ENCODE measurements at regions of chr10 and their contacts with region 1.

Region 1: DNA sequence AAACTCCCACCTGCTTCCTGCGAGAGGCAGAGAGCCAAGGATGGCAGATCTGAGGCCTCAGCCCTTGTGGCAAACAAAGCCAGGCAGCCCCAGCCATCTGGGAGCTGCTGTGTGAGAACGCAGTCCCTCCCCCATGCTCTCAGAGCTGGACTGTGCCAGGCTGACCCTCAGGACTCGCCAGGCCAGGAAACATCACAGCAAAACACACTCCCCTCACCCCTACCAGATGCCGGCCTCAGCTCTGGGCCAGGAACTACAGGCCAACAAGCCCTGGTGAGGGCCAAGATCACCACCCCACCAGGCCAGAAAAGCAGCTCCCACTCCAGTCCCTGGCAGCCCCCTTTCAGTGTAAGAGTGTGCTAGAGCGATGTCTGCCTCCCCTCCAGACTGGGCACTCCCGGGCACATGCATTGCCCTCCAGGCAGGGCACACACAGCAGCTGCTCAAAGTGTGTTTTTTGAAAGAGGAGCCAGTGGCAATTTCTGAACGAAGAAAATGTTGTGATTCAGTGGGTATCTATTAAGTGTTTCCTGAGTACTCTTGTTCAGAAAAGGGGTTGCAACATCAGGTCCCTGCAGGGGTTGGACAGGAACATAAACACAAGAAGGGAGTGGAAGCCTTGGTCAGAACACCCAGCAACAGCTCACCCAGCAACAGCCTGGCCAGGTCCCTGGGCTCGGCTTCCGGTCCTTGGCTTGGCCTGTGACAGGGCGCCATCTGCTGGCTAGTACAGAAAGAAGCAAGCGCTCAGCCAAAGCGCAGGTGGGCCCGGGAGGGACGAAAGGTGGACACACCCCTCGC is 18.3 kb downstream of the LRRC20 start:
- DNase-seq: peak; percentile 91
- H3K4me3 Mint-ChIP-seq: no peak overlapping the region
- H3K27ac Mint-ChIP-seq: no peak overlapping the region
- H3K4me1 Mint-ChIP-seq: peaks cover 7% of the 10 kb centered on the region
- H3K27me3 Mint-ChIP-seq: no peaks in the 10 kb centered on the region

Region 2: DNA sequence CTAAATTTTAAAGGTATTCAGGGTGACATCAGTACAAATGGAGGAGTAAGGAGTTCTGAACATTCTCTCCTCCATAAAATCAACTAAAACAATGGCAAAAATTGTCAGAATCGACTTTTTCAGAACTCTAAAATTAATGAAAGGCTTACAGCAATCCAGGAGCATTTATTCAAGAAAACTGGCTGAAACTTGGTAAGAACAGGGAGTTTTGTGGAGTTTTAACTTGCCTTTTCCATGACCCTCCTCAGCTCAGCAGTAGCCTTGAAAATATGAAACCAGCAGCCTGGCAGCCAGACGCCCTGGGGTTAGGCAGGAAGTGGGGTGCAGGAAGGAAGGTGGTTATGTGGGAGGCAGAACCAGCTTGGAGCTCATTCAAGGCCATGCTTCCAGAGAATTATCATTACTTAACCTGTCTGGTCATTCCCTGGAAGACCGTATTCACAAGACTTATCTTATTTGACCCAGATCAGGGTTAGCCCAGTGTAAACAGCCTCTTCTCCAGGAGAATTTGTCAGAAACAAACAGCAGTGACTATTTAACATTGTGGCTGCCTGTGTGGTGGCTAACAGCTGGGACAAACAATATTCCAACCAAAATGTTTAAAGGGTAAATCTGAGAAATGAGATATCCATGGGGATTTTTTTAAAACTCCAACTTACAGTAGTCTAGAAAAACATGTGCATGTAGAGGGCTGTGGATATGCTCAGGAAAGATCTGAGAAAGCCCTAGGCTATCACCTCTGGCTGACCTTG is 387.2 kb before region 1 on chr10:
- CTCF ChIA-PET with region 1: no interaction called
- POLR2A ChIA-PET with region 1: no interaction called
- intact Hi-C with region 1: no loop called
- DNase-seq: no peak
- H3K4me3 Mint-ChIP-seq: no peak overlapping the region
- H3K27ac Mint-ChIP-seq: no peak overlapping the region
- H3K4me1 Mint-ChIP-seq: no peaks in the 10 kb centered on the region
- H3K27me3 Mint-ChIP-seq: peaks cover 45% of the 10 kb centered on the region

Region 3: GRCh38 chr10:70115948-70116682 is 248.1 kb before region 1 on chr10:
- CTCF ChIA-PET with region 1: interaction called, 56 read pairs
- POLR2A ChIA-PET with region 1: no interaction called
- intact Hi-C with region 1: loop called (anchors 1 kb)
- DNase-seq: peak; percentile 69
- H3K4me3 Mint-ChIP-seq: no peak overlapping the region
- H3K27ac Mint-ChIP-seq: no peak overlapping the region
- H3K4me1 Mint-ChIP-seq: peaks cover 4% of the 10 kb centered on the region
- H3K27me3 Mint-ChIP-seq: no peaks in the 10 kb centered on the region

Region 4: GRCh38 chr10:70212879-70213278 is 151.3 kb before region 1 on chr10:
- CTCF ChIA-PET with region 1: interaction called, 383 read pairs
- POLR2A ChIA-PET with region 1: no interaction called
- intact Hi-C with region 1: no loop called
- DNase-seq: no peak
- H3K4me3 Mint-ChIP-seq: no peak overlapping the region
- H3K27ac Mint-ChIP-seq: no peak overlapping the region
- H3K4me1 Mint-ChIP-seq: no peaks in the 10 kb centered on the region
- H3K27me3 Mint-ChIP-seq: no peaks in the 10 kb centered on the region

Region 5: DNA sequence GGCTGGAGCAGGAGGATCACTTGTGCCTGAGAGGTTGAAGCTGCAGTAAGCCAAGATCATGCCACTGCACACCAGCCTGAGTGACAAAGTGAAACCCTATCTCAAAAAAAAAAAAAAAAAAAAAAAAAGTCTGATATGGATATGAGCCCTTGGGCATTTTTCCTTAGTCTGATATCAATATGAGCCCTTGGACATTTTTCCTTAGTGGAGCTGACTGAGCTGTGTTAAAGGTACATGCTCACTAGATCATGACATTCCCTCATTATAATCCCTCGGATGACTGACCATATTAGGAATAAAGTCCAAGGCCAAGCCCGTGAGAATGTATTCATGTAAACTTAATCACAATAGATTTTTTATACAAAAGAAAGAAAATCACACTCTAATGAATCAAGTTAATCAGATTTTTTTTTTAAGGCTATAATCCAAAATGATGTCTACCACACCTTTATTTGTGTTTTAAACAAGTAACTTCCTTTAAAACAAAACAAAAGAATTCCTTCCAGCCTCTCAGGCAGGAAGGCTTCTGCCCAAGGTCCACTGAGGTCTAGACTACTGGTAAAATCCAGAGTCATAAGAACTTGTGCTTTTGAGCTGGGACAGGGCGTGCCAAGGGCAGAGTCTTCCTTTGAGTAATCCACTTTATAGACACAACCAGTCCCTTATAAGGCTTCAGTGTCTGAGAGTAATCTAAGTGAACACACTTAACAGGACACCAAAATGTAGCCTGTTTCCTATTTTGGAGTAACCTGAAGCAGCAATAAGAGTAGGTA is 136.4 kb before region 1 on chr10:
- CTCF ChIA-PET with region 1: interaction called, 383 read pairs
- POLR2A ChIA-PET with region 1: interaction called, 9 read pairs
- intact Hi-C with region 1: no loop called
- DNase-seq: peak; percentile 20
- H3K4me3 Mint-ChIP-seq: no peak overlapping the region
- H3K27ac Mint-ChIP-seq: no peak overlapping the region
- H3K4me1 Mint-ChIP-seq: peaks cover 54% of the 10 kb centered on the region
- H3K27me3 Mint-ChIP-seq: no peaks in the 10 kb centered on the region

Region 6: DNA sequence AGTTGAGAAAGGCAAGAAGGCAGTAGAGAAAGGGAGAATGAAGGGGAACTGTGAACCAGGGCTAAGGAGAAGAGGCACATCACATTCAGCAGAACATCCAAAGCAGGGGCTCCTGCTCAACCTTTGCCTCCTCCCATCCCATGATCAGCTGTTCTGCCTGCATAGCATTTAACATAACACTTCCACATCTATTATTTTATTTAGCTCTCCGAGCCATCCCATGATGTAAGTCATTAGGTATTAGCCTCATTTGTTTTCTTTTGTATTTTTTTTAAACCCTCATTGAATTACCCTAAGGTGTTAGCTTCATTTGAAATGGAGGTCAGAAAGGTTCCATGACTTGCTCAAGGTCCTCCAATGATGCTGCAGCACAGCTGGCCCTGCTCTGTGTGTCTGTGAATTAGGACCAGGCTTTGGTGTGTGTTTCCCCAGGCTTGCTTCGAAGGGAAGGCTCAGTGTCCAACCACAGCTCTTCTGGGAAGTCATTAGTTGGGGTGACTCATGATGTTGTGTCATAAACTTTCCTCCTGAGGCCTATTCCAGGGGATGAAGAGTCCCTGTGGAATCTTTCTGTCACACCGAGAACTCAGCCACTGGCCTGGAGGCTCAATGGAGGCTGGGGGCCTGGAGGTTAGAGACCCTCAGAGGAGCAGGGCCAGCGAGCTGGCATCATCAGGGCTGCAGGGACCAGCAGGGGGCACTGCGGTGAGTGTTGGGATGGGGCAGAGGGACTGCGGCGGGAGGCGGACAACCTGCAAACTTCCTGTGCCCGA is 96.8 kb before region 1 on chr10:
- CTCF ChIA-PET with region 1: interaction called, 43 read pairs
- POLR2A ChIA-PET with region 1: no interaction called
- intact Hi-C with region 1: no loop called
- DNase-seq: peak; percentile 25
- H3K4me3 Mint-ChIP-seq: no peak overlapping the region
- H3K27ac Mint-ChIP-seq: no peak overlapping the region
- H3K4me1 Mint-ChIP-seq: peaks cover 26% of the 10 kb centered on the region
- H3K27me3 Mint-ChIP-seq: peaks cover 7% of the 10 kb centered on the region

Region 7: DNA sequence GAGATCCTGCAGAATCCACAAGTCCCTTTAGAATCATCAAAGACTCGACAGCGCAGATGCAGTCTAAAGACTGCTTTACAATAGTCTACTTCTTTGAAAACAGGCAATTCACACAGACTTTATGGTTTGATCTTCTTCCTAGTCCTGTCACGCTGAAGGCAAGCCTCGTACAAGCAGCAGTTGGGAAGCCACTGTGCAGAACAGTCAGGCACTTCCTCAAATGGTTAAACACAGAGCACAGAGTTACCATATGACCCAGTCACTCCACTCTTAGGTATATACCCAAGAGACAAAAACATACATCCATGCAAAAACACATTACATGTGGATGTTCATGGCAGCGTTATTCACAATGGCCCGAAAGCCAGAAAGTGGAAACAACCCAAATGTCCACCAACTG is 23.2 kb before region 1 on chr10:
- CTCF ChIA-PET with region 1: interaction called, 10 read pairs
- POLR2A ChIA-PET with region 1: no interaction called
- intact Hi-C with region 1: no loop called
- DNase-seq: no peak
- H3K4me3 Mint-ChIP-seq: no peak overlapping the region
- H3K27ac Mint-ChIP-seq: no peak overlapping the region
- H3K4me1 Mint-ChIP-seq: no peaks in the 10 kb centered on the region
- H3K27me3 Mint-ChIP-seq: no peaks in the 10 kb centered on the region

Region 8: GRCh38 chr10:70381471-70382421 is 17.6 kb after region 1 on chr10:
- CTCF ChIA-PET with region 1: interaction called, 34 read pairs
- POLR2A ChIA-PET with region 1: no interaction called
- intact Hi-C with region 1: no loop called
- DNase-seq: peak; percentile 48
- H3K4me3 Mint-ChIP-seq: peak overlapping the region; percentile 77
- H3K27ac Mint-ChIP-seq: no peak overlapping the region
- H3K4me1 Mint-ChIP-seq: no peaks in the 10 kb centered on the region
- H3K27me3 Mint-ChIP-seq: no peaks in the 10 kb centered on the region

Measured in activated CD4-positive, alpha-beta memory T cell treated with anti-CD3 and anti-CD28 coated beads for 36 hours (primary cell).